ENCODE measurements at regions of chr6 and their contacts with region 1.

Region 1: DNA sequence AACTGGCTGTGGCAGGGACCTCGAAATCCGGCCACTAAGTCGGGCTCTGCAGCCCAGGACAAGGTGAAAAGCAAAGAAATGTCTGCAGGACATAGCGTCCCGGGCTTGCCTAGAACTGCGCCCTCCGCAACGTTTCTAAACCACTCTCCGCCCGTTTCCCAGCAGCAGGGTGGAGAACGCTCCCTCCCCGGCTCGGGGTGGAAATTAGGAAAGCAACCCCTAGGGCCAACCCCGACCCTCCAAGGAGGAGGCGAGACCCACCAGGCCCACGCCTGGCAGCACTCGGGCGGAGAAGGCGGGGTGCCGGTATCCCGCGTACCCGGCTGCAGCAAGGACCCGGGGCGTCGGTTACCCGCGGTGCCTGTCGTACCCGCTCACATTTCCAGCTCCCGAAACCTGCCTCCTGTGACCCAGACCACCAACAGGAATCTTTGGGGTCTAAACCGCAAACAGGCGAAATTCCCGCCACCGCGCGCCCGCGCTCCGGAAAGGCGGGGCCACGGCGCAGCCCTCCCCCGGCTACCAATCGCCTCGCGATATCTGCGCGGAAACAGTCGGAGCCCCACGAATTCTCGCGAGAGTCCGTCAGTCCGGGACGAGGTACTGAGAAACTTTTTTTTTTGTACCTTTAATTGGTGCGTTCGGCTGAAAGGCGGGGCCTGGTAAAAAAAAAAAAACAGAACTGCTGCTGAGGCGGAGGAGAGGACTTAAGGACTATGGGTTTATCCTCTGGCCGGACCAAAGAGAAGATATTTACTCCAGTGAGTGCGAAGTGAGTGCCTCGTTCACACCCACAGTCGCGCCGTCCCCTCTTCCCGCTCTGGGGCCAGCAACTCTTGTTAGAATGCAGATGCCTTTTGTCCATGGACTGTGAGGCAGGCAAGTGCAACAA is at the start of gene MMS22L:
- DNase-seq: peak; percentile 83
- ATAC-seq: peak; percentile 98
- H3K4me3 Mint-ChIP-seq: peak within 1 kb of the TSS; percentile 91
- H3K27ac Mint-ChIP-seq: peak within 1 kb of the TSS; percentile 87
- H3K4me1 Mint-ChIP-seq: peaks cover 21% of the 10 kb centered on the region
- H3K27me3 Mint-ChIP-seq: no peaks in the 10 kb centered on the region
- CTCF ChIP-seq: no peak
- total RNA-seq, gene MMS22L: 15.5 and 17.9 TPM in 2 replicates

Region 2: GRCh38 chr6:95577304-95578105 is 1705.5 kb before region 1 on chr6 and contains the start of gene MANEA:
- CTCF ChIA-PET with region 1: no interaction called
- POLR2A ChIA-PET with region 1: no interaction called
- intact Hi-C with region 1: loop called (anchors 5 kb)
- DNase-seq: peak; percentile 73
- ATAC-seq: peak; percentile 86
- H3K4me3 Mint-ChIP-seq: peak within 1 kb of the TSS; percentile 98
- H3K27ac Mint-ChIP-seq: peak within 1 kb of the TSS; percentile 98
- H3K4me1 Mint-ChIP-seq: peaks cover 33% of the 10 kb centered on the region
- H3K27me3 Mint-ChIP-seq: no peaks in the 10 kb centered on the region
- CTCF ChIP-seq: no peak
- total RNA-seq, gene MANEA: 5.0 and 7.5 TPM in 2 replicates

Region 3: GRCh38 chr6:96923871-96924493 is 359.0 kb before region 1 on chr6:
- CTCF ChIA-PET with region 1: no interaction called
- POLR2A ChIA-PET with region 1: interaction called, 4 read pairs
- intact Hi-C with region 1: loop called (anchors 1 kb)
- DNase-seq: no peak
- ATAC-seq: peak; percentile 10
- H3K4me3 Mint-ChIP-seq: peak overlapping the region; percentile 94
- H3K27ac Mint-ChIP-seq: peak overlapping the region; percentile 92
- H3K4me1 Mint-ChIP-seq: peaks cover 24% of the 10 kb centered on the region
- H3K27me3 Mint-ChIP-seq: peaks cover 3% of the 10 kb centered on the region
- CTCF ChIP-seq: no peak

Region 4: GRCh38 chr6:97205966-97206365 is 77.0 kb before region 1 on chr6:
- CTCF ChIA-PET with region 1: no interaction called
- POLR2A ChIA-PET with region 1: no interaction called
- intact Hi-C with region 1: loop called (anchors 5 kb)
- DNase-seq: no peak
- ATAC-seq: no peak
- H3K4me3 Mint-ChIP-seq: no peak overlapping the region
- H3K27ac Mint-ChIP-seq: no peak overlapping the region
- H3K4me1 Mint-ChIP-seq: no peaks in the 10 kb centered on the region
- H3K27me3 Mint-ChIP-seq: no peaks in the 10 kb centered on the region
- CTCF ChIP-seq: no peak

Region 5: GRCh38 chr6:97669191-97670031 is 386.4 kb after region 1 on chr6:
- CTCF ChIA-PET with region 1: no interaction called
- POLR2A ChIA-PET with region 1: interaction called, 4 read pairs
- intact Hi-C with region 1: loop called (anchors 5 kb)
- DNase-seq: peak; percentile 28
- ATAC-seq: peak; percentile 95
- H3K4me3 Mint-ChIP-seq: no peak overlapping the region
- H3K27ac Mint-ChIP-seq: no peak overlapping the region
- H3K4me1 Mint-ChIP-seq: no peaks in the 10 kb centered on the region
- H3K27me3 Mint-ChIP-seq: no peaks in the 10 kb centered on the region
- CTCF ChIP-seq: no peak

Region 6: DNA sequence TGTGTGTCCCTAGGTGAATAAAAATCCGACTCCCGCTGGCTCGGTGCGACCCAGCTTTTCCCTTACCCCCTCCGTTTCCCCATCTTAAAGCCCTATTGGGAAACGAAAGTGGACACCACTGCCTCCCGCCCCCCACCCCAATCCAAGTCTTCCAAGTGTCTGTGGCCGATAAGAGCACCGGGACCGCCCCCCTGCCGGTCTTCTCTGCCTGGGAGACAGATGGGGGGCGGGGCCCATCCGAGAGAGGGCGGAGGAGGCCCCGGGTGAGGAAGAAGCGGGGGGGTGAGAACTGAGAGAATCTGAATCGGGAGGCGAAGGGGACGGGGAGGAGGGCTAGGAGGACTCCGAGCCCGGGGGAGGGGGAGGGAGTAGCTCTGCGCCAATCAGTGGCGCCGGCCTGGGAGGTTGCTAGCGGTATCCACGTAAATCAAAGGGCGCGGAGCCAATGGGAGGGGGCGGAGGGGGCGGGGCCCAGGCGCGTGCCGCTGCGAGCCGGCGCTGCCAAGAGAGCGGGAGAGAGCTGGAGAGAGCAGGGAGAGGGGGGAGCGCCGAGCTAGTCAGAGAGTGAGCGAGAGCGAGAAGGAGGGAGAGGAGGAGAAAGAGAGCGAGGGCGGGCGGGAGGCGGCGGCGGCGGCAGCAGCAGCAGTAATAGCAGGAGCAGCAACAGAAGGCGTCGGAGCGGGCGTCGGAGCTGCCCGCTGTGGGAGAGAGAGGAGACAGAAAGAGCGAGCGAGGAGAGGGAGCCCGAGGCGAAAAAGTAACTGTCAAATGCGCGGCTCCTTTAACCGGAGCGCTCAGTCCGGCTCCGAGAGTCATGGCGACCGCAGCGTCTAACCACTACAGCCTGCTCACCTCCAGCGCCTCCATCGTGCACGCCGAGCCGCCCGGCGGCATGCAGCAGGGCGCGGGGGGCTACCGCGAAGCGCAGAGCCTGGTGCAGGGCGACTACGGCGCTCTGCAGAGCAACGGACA is 1551.4 kb after region 1 on chr6 and contains the start of gene POU3F2:
- CTCF ChIA-PET with region 1: no interaction called
- POLR2A ChIA-PET with region 1: no interaction called
- intact Hi-C with region 1: loop called (anchors 2 kb)
- DNase-seq: peak; percentile 48
- ATAC-seq: peak; percentile 88
- H3K4me3 Mint-ChIP-seq: peak within 1 kb of the TSS; percentile 89
- H3K27ac Mint-ChIP-seq: no peak within 1 kb of the TSS
- H3K4me1 Mint-ChIP-seq: peaks cover 47% of the 10 kb centered on the region
- H3K27me3 Mint-ChIP-seq: peaks cover 60% of the 10 kb centered on the region
- CTCF ChIP-seq: no peak
- total RNA-seq, gene POU3F2: not detected in 2 replicates